OCI-LY7 (cell line): ENCODE measurements at regions of chr21 and their contacts with region 1.

Region 1: GRCh38 chr21:32516756-32517649 is 68.3 kb downstream of the TCP10L start:
- DNase-seq: no peak
- H3K4me3 ChIP-seq: no peak overlapping the region
- H3K27ac ChIP-seq: no peak overlapping the region
- H3K4me1 ChIP-seq: no peaks in the 10 kb centered on the region
- CTCF ChIP-seq: no peak

Region 2: DNA sequence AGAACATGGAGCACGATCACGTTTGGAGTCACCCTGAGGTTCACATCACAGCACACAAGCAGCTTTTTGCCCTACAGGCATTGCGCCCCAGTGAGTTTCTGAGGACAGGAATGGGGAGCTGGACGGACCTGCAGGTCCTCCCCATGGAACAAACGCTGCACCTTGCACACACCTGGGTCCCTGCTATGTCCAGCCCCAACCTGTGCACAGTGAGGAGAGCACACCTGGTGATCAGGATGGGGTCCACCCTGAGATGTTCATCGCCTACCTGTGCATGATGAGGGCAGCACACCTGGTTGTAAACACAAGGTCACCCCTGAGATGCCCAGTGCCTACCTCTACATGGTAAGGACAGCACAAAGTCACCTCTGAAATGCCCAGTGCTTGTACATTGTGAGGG is 22.4 kb after region 1 on chr21:
- CTCF ChIA-PET with region 1: no interaction called
- POLR2A ChIA-PET with region 1: interaction called, 10 read pairs
- intact Hi-C with region 1: no loop called
- DNase-seq: no peak
- H3K4me3 ChIP-seq: no peak overlapping the region
- H3K27ac ChIP-seq: no peak overlapping the region
- H3K4me1 ChIP-seq: no peaks in the 10 kb centered on the region
- CTCF ChIP-seq: no peak

Region 3: GRCh38 chr21:33025489-33026442 is 508.8 kb after region 1 on chr21 and contains the start of gene OLIG2:
- CTCF ChIA-PET with region 1: no interaction called
- POLR2A ChIA-PET with region 1: no interaction called
- intact Hi-C with region 1: no loop called
- DNase-seq: no peak
- H3K4me3 ChIP-seq: no peak within 1 kb of the TSS
- H3K27ac ChIP-seq: no peak within 1 kb of the TSS
- H3K4me1 ChIP-seq: no peaks in the 10 kb centered on the region
- CTCF ChIP-seq: no peak
- total RNA-seq, gene OLIG2: not detected in 2 replicates